Transverse colon (tissue), 4 donors: ENCODE measurements at regions of chr17 and their contacts with region 1.

Region 1: DNA sequence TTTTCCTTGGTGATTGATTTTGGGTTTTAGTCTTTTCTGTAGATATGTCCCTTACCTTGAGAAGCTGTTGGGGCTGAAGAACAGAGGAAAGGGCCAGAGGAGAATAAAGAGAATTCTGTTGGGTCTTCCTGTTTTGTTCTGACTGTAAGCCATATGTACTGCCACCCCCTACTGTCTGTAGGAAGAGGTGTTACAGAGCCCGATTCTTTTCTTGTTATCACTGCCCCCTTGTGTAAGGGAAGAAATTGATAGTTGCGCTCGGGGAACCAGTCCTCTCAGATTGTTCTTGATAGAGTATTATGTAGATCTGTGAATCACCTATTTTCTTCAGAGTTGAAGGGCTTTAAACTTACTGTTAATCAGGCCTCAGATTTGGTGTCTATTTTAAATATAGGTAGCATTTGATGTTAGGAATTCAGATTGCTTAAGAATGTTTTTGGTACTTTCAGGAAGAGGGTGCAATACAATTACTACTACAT is 2.4 kb downstream of the TANC2 start:
- DNase-seq: peak; percentile 44
- H3K4me3 ChIP-seq: no peak overlapping the region
- H3K27ac ChIP-seq: no peak overlapping the region
- H3K4me1 ChIP-seq: peaks cover 10 to 27% (median 19%) of the 10 kb centered on the region in 4 donors
- H3K27me3 ChIP-seq: peaks cover 4% of the 10 kb centered on the region
- CTCF ChIP-seq: peak; percentile 71 to 92 (median 73)
- EP300 ChIP-seq: no peak
- POLR2A ChIP-seq: no peak

Region 2: GRCh38 chr17:62703775-62704378 is 264.6 kb before region 1 on chr17:
- in situ Hi-C with region 1: loop called in 3 of 4 experiments (anchors 10 kb)
- intact Hi-C with region 1: loop called (anchors 2 kb)
- DNase-seq: peak; percentile 76
- H3K4me3 ChIP-seq: peak overlapping the region; percentile 51 to 73 (median 68)
- H3K27ac ChIP-seq: peak overlapping the region; percentile 66 to 77 (median 72)
- H3K4me1 ChIP-seq: peaks cover 0 to 17% (median 13%) of the 10 kb centered on the region in 4 donors
- H3K27me3 ChIP-seq: peaks cover 12% of the 10 kb centered on the region
- CTCF ChIP-seq: peak; percentile 58 to 91 (median 80)
- EP300 ChIP-seq: no peak
- POLR2A ChIP-seq: no peak

Region 3: DNA sequence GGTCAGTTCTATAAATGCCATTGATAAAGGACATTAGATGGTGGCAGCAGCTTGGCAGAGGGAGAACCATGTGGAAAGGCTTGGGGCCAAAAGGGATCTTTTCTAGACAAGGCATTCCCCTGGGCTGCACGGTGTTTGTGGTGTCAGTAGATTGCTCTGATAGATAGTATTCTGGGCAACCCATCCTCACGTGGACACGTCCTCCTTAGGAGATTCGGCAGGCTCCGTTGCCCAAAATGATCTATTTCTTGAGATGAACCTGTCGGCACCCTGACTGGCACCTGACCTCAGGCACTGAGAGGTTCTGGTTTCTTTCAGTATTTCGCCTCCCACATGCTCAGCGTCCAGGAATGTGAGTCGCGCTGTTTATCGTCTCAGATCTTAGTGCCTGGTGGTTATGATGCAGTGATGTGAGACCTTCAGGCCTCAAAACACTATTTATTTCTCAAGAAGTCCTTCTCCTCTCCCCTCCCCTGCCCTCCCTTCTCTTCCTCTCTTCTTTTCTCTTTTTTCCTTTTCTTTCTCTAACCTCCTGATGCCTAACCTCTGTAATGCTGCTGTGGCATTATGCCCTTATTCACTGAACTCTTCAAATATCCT is 250.0 kb before region 1 on chr17:
- in situ Hi-C with region 1: loop called in 1 of 4 experiments (anchors 10 kb)
- intact Hi-C with region 1: no loop called
- DNase-seq: no peak
- H3K4me3 ChIP-seq: no peak overlapping the region
- H3K27ac ChIP-seq: no peak overlapping the region
- H3K4me1 ChIP-seq: no peaks in the 10 kb centered on the region
- H3K27me3 ChIP-seq: peaks cover 5% of the 10 kb centered on the region
- CTCF ChIP-seq: no peak
- EP300 ChIP-seq: no peak
- POLR2A ChIP-seq: no peak

Region 4: GRCh38 chr17:64599187-64599676 is 1630.7 kb after region 1 on chr17:
- in situ Hi-C with region 1: no loop called
- intact Hi-C with region 1: no loop called
- DNase-seq: peak; percentile 29
- H3K4me3 ChIP-seq: no peak overlapping the region
- H3K27ac ChIP-seq: no peak overlapping the region
- H3K4me1 ChIP-seq: peaks cover 0 to 11% (median 0%) of the 10 kb centered on the region in 4 donors
- H3K27me3 ChIP-seq: no peaks in the 10 kb centered on the region
- CTCF ChIP-seq: no peak
- EP300 ChIP-seq: no peak
- POLR2A ChIP-seq: no peak